Dorsolateral prefrontal cortex (tissue), 120 donors: ENCODE measurements at regions of chr5 and their contacts with region 1.

Region 1: GRCh38 chr5:115625579-115626444 is at the start of gene TMED7:
- DNase-seq: peak; percentile 98 to 100 (median 99)
- H3K4me3 ChIP-seq: peak within 1 kb of the TSS; percentile 58 to 99 (median 89)
- H3K27ac ChIP-seq: peak within 1 kb of the TSS; percentile 66 to 96 (median 91)
- H3K27me3 ChIP-seq: no peaks in the 10 kb centered on the region
- CTCF ChIP-seq: peak in 39 of 56 donors; percentile 8 to 59 (median 33)
- total RNA-seq, gene TMED7: 48.1 to 112 (median 68.4) TPM

Region 2: GRCh38 chr5:115605436-115605835 is 20.4 kb before region 1 on chr5:
- intact Hi-C with region 1: loop called in 1 of 2 experiments (anchors 2 kb)
- DNase-seq: no peak
- H3K4me3 ChIP-seq: no peak overlapping the region
- H3K27ac ChIP-seq: peak overlapping the region in 2 of 59 donors; percentile 6 to 25
- H3K27me3 ChIP-seq: no peaks in the 10 kb centered on the region
- CTCF ChIP-seq: no peak

Region 3: DNA sequence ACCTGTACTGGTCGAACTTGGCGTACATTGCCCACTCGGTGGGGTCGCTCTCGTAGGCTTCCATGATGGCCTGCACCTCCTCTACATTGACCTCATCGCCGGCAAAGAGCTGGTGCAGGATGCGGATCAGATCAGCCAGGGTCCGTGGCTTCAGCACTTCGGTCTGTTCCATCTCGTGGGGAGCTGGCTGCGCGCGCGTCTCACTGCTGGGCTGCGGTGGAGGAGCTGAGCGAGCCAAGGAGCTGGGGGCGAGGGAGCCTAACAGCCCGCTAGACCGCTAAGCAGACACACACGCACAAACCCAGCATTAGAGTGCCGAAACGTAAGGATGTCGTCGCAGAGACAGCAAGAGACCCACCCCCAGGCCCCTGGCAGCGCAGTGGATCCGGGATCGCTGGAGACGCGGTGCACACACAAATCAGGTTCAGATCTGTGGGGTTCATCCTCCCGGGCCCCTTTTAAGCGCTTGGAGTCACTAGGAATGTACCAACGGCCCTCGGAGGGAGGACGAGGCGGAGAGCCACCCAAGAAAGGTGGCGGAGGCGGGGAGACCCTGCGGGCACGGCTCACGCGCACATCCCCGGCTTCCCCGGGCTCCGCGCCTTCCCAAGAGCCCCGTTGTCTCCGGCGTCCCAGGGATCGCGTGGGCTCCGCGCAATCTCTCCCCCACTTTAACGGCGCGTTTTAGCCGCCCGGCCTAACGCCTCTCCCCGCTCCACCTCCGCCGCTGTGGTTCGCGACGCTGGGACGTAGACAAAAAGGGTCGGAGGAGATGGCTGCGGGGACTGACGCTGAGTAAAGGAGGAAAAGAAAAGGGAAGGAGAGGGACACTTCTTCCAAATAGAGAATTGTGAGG is 190.6 kb after region 1 on chr5 and contains the start of gene CDO1:
- intact Hi-C with region 1: loop called in 1 of 2 experiments (anchors 5 kb)
- DNase-seq: peak; percentile 28 to 90 (median 79)
- H3K4me3 ChIP-seq: peak within 1 kb of the TSS; percentile 48 to 87 (median 72)
- H3K27ac ChIP-seq: peak within 1 kb of the TSS in 58 of 59 donors; percentile 32 to 98 (median 90)
- H3K27me3 ChIP-seq: peaks cover 0 to 19% (median 0%) of the 10 kb centered on the region in 45 donors
- CTCF ChIP-seq: no peak
- total RNA-seq, gene CDO1: 16.9 to 60.2 (median 36.8) TPM